Endothelial cell of umbilical vein (primary cell): ENCODE measurements at regions of chr13 and their contacts with region 1.

Region 1: GRCh38 chr13:45119991-45120864 is at the start of gene GTF2F2:
- DNase-seq: peak; percentile 94
- H3K4me3 ChIP-seq: peak within 1 kb of the TSS; percentile 83 to 100 (median 85)
- H3K27ac ChIP-seq: peak within 1 kb of the TSS; percentile 59
- H3K4me1 ChIP-seq: peaks cover 16% of the 10 kb centered on the region
- H3K27me3 ChIP-seq: no peaks in the 10 kb centered on the region
- CTCF ChIP-seq: no peak
- POLR2A ChIP-seq: peak; percentile 72
- total RNA-seq, gene GTF2F2: 22.7 and 23.6 TPM in 2 replicates

Region 2: GRCh38 chr13:43905435-43906031 is 1214.7 kb before region 1 on chr13:
- CTCF ChIA-PET with region 1: no interaction called
- POLR2A ChIA-PET with region 1: no interaction called
- dilution Hi-C with region 1: no loop called
- intact Hi-C with region 1: no loop called
- DNase-seq: peak; percentile 68
- H3K4me3 ChIP-seq: no peak overlapping the region
- H3K27ac ChIP-seq: no peak overlapping the region
- H3K4me1 ChIP-seq: no peaks in the 10 kb centered on the region
- H3K27me3 ChIP-seq: peaks cover 0 to 6% of the 10 kb centered on the region in 2 experiments
- CTCF ChIP-seq: peak; percentile 43 to 45
- POLR2A ChIP-seq: no peak

Region 3: GRCh38 chr13:45206340-45206739 is 86.1 kb after region 1 on chr13:
- CTCF ChIA-PET with region 1: no interaction called
- POLR2A ChIA-PET with region 1: no interaction called
- dilution Hi-C with region 1: no loop called
- intact Hi-C with region 1: loop called (anchors 5 kb)
- DNase-seq: peak; percentile 84
- H3K4me3 ChIP-seq: no peak overlapping the region
- H3K27ac ChIP-seq: peak overlapping the region; percentile 88
- H3K4me1 ChIP-seq: peaks cover 23% of the 10 kb centered on the region
- H3K27me3 ChIP-seq: no peaks in the 10 kb centered on the region
- CTCF ChIP-seq: no peak
- POLR2A ChIP-seq: no peak

Region 4: DNA sequence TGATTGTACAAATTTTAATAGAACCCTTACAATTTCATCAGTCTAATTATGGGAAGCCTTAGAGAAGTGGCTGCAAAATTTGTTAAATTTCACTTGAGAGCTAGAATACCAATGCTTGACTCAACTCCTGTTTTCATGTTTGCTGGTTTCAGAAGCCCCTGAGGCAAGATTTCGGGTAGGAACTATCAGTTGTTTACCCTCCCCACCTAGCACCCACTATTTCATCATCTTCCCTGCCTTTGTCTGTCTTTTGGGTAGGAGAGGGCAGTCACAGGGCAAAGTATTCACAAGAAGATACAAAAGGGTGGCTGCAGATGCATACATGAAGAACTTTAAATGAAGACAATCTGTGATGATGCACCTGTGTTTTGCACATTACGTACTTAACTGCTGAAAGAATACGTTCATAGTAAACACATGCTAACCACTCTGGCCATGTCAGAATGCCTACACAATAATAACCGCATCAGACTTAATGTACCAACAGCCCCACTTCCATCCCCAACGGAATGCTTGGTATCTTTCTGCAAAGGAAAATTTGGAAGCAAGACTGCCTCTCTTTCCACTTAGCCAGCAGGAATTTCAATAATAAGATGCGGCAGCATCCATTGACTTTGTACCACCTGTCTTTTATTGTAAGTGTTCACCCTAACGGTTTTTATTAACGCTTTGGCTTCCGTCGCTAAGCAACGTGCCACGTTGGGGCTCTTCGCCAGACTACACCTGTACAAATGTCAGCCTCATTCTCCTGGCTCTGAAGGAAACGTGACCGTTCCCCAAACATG is 190.3 kb after region 1 on chr13:
- CTCF ChIA-PET with region 1: interaction called, 4 read pairs
- POLR2A ChIA-PET with region 1: no interaction called
- dilution Hi-C with region 1: no loop called
- intact Hi-C with region 1: loop called (anchors 1 kb)
- DNase-seq: no peak
- H3K4me3 ChIP-seq: peak overlapping the region in 1 of 3 experiments; percentile 15
- H3K27ac ChIP-seq: no peak overlapping the region
- H3K4me1 ChIP-seq: peaks cover 10% of the 10 kb centered on the region
- H3K27me3 ChIP-seq: peaks cover 0 to 2% of the 10 kb centered on the region in 2 experiments
- CTCF ChIP-seq: no peak
- POLR2A ChIP-seq: no peak